Common myeloid progenitor, CD34-positive (primary cell): ENCODE measurements at regions of chr19 and their contacts with region 1.

Region 1: DNA sequence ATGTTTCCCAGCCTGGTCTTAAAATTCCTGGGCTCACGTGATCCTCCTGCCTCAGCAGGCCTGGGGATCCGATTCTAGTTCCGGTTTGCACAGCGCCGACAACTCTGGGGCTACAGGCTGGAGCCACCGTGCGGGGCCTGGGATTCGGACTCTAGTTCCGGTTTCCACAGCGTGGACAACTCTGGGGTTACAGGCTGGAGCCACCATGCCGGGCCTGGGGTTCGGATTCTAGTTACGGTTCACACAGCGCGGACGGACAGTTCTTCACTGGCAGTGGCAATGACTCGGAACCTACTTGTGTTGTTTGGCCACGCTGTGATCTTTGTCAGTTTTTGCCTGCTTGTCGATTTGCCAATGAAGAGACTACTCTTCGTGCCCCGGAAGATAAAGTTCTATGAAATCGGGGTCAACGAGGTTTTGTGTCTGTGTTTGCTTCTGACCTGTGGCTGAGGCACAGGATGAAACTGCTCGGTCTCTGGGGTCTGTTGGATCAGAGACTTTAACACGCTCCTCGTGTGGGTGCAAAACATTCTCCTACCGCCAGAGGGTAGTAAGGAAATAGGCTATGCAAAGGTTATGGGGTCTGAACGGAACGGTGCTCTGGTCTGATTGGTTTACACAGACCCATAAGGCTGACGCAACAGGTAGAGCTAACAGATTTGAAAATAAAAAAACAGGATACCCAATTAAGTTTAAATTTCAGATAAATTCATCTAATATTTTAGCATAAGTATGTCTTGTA is 12.1 kb upstream of the ZSCAN1 start:
- DNase-seq: peak; percentile 94 to 97 (median 95)
- H3K4me3 ChIP-seq: peak overlapping the region in 1 of 7 experiments; percentile 23
- H3K27ac ChIP-seq: no peak overlapping the region
- H3K4me1 ChIP-seq: peaks cover 0 to 2% (median 0%) of the 10 kb centered on the region in 4 experiments
- H3K27me3 ChIP-seq: no peaks in the 10 kb centered on the region

Region 2: DNA sequence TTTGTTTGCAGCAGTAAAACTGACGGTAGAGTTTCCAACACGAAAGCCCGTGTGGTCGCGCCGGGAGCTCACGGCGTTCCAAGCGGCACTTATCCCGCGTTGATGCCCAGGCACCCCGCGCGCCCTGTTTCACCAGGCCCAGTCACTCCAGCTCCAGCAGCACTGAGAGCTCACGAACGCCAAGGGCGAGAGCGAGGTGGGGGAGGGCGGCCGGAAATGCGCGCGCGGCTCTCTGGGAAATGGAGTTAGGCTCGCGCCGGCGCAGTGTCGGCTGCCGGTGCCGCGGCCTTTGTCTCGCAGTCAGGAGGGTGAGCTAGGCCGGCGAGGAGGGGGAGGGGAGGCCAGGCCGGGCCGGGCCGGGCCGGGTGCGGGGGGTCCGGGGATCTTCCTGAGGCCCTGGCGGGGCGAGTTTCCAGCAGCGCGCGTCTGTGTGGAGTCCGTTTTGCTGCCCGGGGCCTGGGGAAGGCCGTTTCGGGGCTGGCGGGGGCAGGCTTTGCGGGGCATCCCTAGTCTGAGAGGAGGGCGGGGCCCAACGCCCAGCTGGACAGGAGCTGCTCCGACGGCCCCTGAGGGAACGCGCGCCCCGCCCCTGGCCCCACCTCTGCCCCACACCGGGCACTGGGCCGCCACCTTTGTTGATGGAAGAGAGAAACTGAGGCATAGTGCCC is 37.4 kb after region 1 on chr19 and contains the start of gene ZNF135:
- CTCF ChIA-PET with region 1: interaction called, 27 read pairs
- POLR2A ChIA-PET with region 1: no interaction called
- DNase-seq: peak; percentile 91 to 95 (median 94)
- H3K4me3 ChIP-seq: peak within 1 kb of the TSS; percentile 42 to 86 (median 58)
- H3K27ac ChIP-seq: peak within 1 kb of the TSS; percentile 74 to 85
- H3K4me1 ChIP-seq: peaks cover 0 to 21% (median 10%) of the 10 kb centered on the region in 4 experiments
- H3K27me3 ChIP-seq: no peaks in the 10 kb centered on the region

Region 3: GRCh38 chr19:58154679-58155648 is 133.3 kb after region 1 on chr19:
- CTCF ChIA-PET with region 1: interaction called, 61 read pairs
- POLR2A ChIA-PET with region 1: no interaction called
- DNase-seq: peak; percentile 91 to 96 (median 93)
- H3K4me3 ChIP-seq: peak overlapping the region; percentile 64 to 97 (median 94)
- H3K27ac ChIP-seq: peak overlapping the region; percentile 61 to 79
- H3K4me1 ChIP-seq: peaks cover 0 to 21% (median 12%) of the 10 kb centered on the region in 4 experiments
- H3K27me3 ChIP-seq: no peaks in the 10 kb centered on the region